ENCODE measurements at regions of chr7 and their contacts with region 1.

Region 1: DNA sequence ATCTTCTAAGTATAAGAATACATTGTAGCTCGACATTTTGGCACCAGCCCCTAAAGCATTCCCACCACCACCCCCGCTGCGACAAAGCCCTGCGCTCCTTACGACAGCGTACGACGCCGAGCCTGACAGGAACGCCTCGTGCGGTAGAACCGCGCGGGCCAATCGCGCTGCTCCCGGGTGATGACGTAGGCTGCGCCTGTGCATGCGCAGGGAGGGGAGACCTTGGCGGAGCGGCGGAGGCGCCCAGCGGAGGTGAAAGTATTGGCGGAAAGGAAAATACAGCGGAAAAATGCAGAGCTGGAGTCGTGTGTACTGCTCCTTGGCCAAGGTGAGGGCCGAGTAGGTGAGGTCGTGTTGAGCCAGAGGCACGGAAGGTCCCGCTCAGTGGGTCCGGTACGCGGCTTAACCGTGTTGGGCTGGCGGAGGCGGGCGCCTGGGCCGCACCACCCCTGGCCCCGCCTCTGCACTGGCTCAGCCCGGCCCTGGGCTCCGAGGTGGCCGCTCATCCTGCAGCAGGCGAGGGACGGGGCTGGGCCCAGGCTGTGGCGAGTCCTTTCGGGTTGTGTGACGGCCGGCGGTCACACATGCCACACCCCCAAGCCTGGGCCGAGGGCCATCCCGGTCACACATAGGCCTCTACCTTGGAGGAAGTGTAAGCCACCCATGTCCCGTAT is at the start of gene DLD:
- DNase-seq: peak; percentile 95 to 97 (median 97)
- ATAC-seq: peak; percentile 98 to 99 (median 99)
- H3K4me3 ChIP-seq: peak within 1 kb of the TSS; percentile 40 to 94 (median 76)
- H3K27ac ChIP-seq: peak within 1 kb of the TSS; percentile 91 to 99 (median 96)
- H3K4me1 ChIP-seq: peaks cover 7 to 50% (median 38%) of the 10 kb centered on the region in 12 donors
- H3K27me3 ChIP-seq: no peaks in the 10 kb centered on the region
- CTCF ChIP-seq: peak in 1 of 12 donors; percentile 15
- POLR2A ChIP-seq: peak in 1 of 2 donors; percentile 92
- total RNA-seq, gene DLD: 154 to 426 (median 287) TPM

Region 2: GRCh38 chr7:107700570-107700969 is 190.5 kb before region 1 on chr7:
- intact Hi-C with region 1: no loop called
- DNase-seq: no peak
- ATAC-seq: no peak
- H3K4me3 ChIP-seq: no peak overlapping the region
- H3K27ac ChIP-seq: no peak overlapping the region
- H3K4me1 ChIP-seq: peaks cover 0 to 10% (median 0%) of the 10 kb centered on the region in 12 donors
- H3K27me3 ChIP-seq: no peaks in the 10 kb centered on the region
- CTCF ChIP-seq: no peak
- POLR2A ChIP-seq: no peak

Region 3: DNA sequence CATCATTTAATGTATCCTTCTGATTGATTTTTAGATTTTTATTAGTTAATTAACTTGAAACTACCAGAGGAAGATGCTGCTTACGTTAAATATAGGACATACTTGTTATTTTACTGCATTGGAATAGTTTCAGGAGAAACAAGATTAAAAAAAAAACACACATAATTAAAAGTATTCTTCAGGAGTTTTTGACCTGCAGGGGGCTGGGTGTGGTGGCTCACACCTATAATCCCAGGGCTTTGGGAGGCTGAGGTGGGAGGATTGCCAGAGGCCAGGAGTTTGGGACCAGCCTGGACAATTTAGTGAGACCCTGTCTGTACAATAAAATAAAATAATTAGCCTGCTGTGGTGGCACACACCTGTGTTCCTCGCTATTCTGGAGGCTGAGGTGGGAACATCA is 136.5 kb before region 1 on chr7:
- intact Hi-C with region 1: no loop called
- DNase-seq: no peak
- ATAC-seq: no peak
- H3K4me3 ChIP-seq: no peak overlapping the region
- H3K27ac ChIP-seq: no peak overlapping the region
- H3K4me1 ChIP-seq: no peaks in the 10 kb centered on the region
- H3K27me3 ChIP-seq: no peaks in the 10 kb centered on the region
- CTCF ChIP-seq: peak in 1 of 12 donors; percentile 9
- POLR2A ChIP-seq: no peak

Region 4: DNA sequence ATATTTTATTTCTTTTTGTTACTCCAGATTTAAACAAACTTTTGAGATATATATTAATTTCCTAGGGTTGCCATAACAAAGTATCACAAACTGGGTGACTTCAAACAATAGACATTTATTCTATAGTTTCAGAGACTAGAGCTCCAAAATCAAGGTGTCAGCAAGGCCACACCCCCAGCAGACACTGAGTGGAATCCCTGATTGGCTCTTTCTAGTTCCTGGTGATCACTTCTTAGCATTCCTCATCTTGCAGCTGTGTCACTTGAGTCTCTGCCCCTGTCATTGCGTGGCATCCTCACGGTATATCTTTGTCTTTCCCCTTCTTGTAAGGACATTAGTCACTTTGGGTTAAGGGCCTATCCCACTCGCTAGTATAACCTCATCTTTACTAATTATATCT is 80.5 kb before region 1 on chr7:
- intact Hi-C with region 1: no loop called
- DNase-seq: no peak
- ATAC-seq: no peak
- H3K4me3 ChIP-seq: no peak overlapping the region
- H3K27ac ChIP-seq: peak overlapping the region in 1 of 12 donors; percentile 75
- H3K4me1 ChIP-seq: no peaks in the 10 kb centered on the region
- H3K27me3 ChIP-seq: no peaks in the 10 kb centered on the region
- CTCF ChIP-seq: no peak
- POLR2A ChIP-seq: no peak

Region 5: DNA sequence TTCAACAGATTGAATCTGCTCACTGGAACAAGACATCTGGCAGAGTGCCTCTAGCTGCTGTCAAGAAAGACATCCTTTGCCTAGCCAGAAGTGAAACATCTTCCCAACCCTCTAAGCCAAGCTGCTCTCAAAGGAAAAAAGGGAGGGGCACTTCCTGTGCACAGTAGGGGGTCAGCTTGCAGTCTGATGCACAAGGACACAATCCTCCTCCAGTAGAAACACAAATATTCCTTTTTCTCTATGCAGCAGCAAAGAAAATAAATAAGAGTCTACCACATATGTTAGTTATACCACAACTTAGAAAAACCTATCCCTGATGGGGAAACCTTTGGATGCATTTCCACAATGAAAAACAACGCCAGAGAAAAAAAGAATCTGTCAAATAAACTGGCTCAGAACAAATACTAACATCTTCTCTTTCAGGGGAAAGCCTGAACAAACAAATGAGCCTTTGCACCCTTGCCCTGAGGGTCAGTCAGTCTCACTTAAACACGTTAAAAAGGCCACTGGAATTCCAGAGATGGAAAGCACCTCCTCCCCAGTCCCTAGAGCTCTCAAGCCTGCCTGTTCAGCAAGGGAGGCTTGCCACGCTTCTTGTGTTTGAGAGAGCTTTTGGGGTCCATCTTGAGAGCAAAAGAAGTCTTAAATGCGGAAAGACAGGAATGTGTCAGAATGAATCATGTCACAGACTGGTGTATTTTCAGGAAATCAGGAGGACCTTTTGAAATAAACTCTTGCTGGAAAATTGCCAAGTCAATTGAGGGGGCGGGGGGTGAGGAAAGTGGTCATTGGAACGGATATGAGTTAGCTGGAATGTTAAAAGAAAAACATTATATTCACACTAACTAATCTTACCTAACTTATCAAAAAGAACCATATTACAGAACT is 104.3 kb after region 1 on chr7:
- intact Hi-C with region 1: loop called in 3 of 10 experiments (anchors 2 to 10 kb)
- DNase-seq: peak in 4 of 5 donors; percentile 54 to 67 (median 59)
- ATAC-seq: peak; percentile 62 to 72 (median 70)
- H3K4me3 ChIP-seq: no peak overlapping the region
- H3K27ac ChIP-seq: peak overlapping the region; percentile 49 to 79 (median 63)
- H3K4me1 ChIP-seq: peaks cover 0 to 80% (median 44%) of the 10 kb centered on the region in 12 donors
- H3K27me3 ChIP-seq: no peaks in the 10 kb centered on the region
- CTCF ChIP-seq: no peak
- POLR2A ChIP-seq: no peak

Region 6: DNA sequence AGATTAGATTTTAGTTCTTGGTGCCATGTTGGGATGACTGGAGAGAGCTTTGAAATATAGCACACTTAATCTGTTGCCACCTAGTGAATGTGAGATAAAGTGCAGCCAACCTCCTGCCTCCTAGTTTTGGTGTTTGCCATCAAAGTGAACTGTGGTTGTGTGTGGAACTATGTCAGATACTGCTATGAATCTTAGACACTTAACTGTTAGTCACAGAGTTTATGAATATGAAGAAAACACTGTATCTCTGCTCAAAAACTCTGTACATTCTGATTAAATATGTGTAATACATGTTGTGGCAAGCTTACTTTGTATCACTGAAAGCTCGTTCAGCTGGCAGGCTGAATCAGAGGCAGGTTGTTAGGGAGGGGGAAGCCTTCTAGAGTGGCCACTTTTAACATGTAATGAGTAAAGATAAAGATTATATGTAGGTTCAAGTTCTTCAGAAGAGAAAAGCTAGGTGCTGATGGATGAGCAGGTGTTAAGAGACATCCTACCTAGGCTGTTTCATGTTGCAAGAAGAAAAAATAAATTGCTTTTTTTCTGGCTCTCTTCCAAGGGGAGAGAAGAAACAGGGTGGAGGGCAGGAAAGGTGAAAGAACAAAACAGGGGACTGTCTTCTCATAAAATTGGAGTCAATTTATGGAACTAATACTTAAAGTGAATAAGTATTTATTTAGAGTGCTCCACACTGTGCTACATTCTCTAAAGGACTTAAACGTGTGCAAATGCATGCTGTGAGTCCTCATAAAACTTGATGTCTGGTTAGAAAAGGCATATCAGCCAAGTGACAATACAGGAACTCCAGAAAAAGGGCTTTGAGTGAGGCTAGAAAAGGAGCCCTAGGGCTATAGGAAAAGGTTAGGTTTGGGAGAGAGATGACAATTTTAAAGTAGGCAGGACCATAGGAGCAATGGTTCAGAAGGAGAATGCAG is 126.0 kb after region 1 on chr7:
- intact Hi-C with region 1: loop called in 3 of 10 experiments (anchors 5 to 10 kb)
- DNase-seq: no peak
- ATAC-seq: peak in 3 of 4 donors; percentile 51 to 58 (median 54)
- H3K4me3 ChIP-seq: no peak overlapping the region
- H3K27ac ChIP-seq: no peak overlapping the region
- H3K4me1 ChIP-seq: peaks cover 0 to 18% (median 0%) of the 10 kb centered on the region in 12 donors
- H3K27me3 ChIP-seq: no peaks in the 10 kb centered on the region
- CTCF ChIP-seq: peak; percentile 23 to 59 (median 44)
- POLR2A ChIP-seq: no peak

Region 7: DNA sequence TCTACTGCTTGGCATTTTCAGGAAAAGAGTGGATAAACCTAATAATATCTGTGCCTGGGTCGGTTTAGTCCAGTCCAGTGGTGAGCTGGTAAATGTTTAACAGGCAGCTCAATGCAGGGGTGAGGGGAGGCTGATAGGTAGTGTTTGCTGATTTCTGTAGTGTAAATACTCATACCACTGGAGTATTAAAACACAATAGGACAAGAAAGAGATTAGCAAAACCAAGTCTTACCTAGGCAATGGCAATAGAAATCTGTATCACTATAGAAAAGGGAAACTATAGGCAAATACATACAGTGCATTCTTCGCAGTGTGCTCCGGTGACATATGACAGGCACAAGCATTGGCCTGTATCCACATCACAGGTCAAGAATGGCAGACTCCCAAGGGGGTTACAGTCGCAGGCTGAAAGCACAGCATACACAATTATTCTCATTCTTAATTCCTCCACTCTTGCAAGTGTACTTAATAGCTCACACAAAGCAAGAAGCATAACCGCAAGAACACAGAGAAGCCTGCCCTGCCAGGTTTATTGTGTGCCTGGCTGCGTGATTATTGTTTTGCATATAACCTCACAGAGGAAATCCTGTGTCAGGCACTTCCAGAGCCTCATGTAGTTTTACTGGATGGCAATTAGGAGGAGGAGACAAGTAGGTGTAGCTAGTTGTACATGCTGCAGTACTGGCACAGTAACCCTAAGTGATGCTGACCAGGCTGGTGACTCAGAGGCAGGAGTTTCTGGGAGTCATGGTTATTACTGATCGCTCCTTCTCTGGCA is 204.0 kb after region 1 on chr7:
- intact Hi-C with region 1: loop called in 1 of 10 experiments (anchors 5 kb)
- DNase-seq: peak in 2 of 5 donors; percentile 25 to 52
- ATAC-seq: peak; percentile 49 to 88 (median 80)
- H3K4me3 ChIP-seq: peak overlapping the region in 3 of 12 donors; percentile 14 to 20 (median 14)
- H3K27ac ChIP-seq: peak overlapping the region; percentile 10 to 73 (median 50)
- H3K4me1 ChIP-seq: peaks cover 0 to 33% (median 22%) of the 10 kb centered on the region in 12 donors
- H3K27me3 ChIP-seq: no peaks in the 10 kb centered on the region
- CTCF ChIP-seq: no peak
- POLR2A ChIP-seq: no peak

Region 8: DNA sequence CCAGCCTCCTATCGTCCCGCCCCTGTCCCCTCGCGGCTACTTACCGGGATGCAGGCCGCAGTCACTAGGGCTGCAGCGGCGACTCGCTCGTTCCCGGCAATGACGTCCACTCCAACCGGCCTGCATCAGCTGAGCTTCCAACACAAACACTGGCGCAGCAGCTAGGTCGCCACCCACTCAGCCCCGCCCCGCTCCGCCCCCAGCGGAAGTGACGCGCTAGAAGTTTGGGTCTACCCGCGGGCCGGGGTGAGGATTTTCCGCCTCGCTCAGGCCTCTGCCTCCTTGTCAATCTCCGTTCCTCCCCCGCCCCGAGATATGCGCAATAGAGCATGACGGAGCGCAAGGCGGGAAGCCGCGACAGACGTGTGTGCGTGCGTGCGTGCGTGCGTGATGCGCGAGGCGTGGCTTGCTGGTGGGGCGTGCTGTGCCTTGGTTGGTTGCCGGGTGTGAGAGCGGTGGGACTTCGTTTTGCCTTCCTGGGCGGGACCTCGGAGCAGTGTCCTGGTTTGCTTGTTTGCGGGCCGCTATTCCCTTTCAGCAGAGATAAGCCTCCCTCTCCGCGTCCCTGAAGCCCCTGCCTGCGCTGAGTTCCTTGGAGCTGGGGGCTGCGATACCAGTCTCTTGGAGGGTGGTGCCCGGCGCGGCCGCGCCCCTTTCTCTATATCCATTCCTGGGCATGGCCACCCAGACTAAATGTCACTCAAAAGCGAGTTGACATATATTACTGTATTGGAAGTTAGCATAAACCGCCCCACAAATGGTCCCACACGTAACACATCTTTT is 635.1 kb after region 1 on chr7 and contains the start of gene PNPLA8:
- intact Hi-C with region 1: loop called in 1 of 10 experiments (anchors 5 kb)
- DNase-seq: peak; percentile 100
- ATAC-seq: peak; percentile 94 to 97 (median 96)
- H3K4me3 ChIP-seq: peak within 1 kb of the TSS; percentile 39 to 89 (median 72)
- H3K27ac ChIP-seq: peak within 1 kb of the TSS; percentile 83 to 99 (median 96)
- H3K4me1 ChIP-seq: peaks cover 0 to 38% (median 26%) of the 10 kb centered on the region in 12 donors
- H3K27me3 ChIP-seq: no peaks in the 10 kb centered on the region
- CTCF ChIP-seq: peak in 1 of 12 donors; percentile 15
- POLR2A ChIP-seq: peak; percentile 51 to 78
- total RNA-seq, gene PNPLA8: 26.1 to 50.9 (median 32.8) TPM

Measured in heart left ventricle (tissue), 16 donors.